BJ (cell line): ENCODE measurements at regions of chr16 and their contacts with region 1.

Region 1: DNA sequence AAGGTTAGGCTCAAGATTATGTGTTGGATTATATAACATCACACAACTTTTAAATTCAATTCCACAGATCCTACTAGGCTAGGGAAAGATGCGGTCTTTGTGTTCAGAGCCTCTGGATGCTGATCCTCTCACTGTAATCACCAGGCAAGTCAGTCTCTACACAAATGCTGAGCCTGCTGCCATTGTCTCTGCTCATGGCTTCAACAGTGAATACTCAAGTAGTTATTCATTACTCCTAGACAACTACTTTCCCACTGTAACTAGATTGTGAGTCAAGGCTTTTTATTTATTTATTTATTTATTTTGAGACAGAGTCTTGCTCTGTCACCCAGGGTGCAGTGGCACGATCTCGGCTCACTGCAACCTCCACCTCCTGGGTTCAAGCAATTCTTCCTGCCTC is 15.8 kb upstream of the NDUFAB1 start:
- DNase-seq: no peak
- H3K4me3 ChIP-seq: no peak overlapping the region
- H3K27me3 ChIP-seq: no peaks in the 10 kb centered on the region
- CTCF ChIP-seq: no peak

Region 2: GRCh38 chr16:23595951-23596720 is 15.8 kb before region 1 on chr16 and contains the start of gene NDUFAB1:
- CTCF ChIA-PET with region 1: interaction called, 11 read pairs
- POLR2A ChIA-PET with region 1: no interaction called
- DNase-seq: peak; percentile 32
- H3K4me3 ChIP-seq: peak within 1 kb of the TSS; percentile 93
- H3K27me3 ChIP-seq: no peaks in the 10 kb centered on the region
- CTCF ChIP-seq: peak; percentile 74
- polyA plus RNA-seq, gene NDUFAB1: 64.6 and 71.9 TPM in 2 replicates

Region 3: DNA sequence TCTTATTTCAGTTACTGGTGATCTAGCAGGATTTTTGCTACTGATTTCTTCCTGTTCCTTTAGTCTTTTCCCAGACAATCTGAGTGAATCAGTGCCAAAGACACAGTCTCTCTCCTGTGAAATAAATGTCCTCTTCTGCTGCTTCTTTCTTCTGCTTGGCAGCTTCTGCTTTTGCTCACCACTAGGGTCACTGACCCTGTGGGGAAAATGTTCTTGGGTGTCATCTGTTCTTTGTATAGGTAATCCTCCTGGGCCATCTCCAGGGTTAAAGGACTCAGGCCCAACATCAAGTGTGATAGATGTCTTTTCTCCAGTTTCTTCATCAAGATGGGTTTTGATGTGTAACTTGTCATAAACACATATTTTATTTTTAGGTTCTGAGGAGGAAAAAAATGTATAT is 24.0 kb after region 1 on chr16:
- CTCF ChIA-PET with region 1: no interaction called
- POLR2A ChIA-PET with region 1: no interaction called
- DNase-seq: no peak
- H3K4me3 ChIP-seq: no peak overlapping the region
- H3K27me3 ChIP-seq: no peaks in the 10 kb centered on the region
- CTCF ChIP-seq: no peak